Common myeloid progenitor, CD34-positive (primary cell): ENCODE measurements at regions of chr19 and their contacts with region 1.

Region 1: GRCh38 chr19:45001087-45001739 is at the start of gene RELB:
- DNase-seq: peak; percentile 88 to 92 (median 90)
- H3K4me3 ChIP-seq: peak within 1 kb of the TSS; percentile 50 to 90 (median 77)
- H3K27ac ChIP-seq: peak within 1 kb of the TSS; percentile 99 to 100
- H3K4me1 ChIP-seq: peaks cover 0 to 14% (median 12%) of the 10 kb centered on the region in 4 experiments
- H3K27me3 ChIP-seq: no peaks in the 10 kb centered on the region

Region 2: DNA sequence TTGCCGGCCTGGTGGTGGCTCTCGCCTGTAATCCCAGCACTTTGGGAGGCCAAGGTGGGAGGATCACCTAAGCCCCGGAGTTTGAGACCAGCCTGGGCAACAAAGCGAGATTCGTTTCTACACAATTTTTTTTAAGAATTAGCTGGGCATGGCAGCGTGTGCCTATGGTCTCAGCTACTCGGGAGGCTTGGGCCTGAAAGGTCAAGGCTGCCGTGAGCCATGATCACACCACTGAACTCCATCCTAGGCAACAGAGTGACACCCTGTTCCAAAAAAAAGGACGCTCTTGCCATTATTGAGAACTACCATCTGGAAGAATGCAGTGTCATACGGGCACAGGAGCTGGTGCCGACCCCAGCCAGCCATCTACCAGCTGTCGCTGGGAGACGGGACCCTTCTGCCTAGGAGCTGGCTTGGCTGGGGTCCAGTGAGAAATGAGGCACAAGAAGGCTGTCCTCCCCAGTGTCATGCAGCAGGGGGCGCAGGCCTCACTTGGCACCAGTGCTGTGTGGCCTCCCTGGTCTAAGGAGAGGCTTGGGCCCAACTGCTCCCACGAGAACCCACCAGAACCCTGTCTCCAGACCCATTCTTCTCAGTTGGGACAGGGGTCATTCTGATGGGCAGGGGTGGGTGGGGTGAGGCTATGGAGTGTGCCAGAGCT is 12.2 kb before region 1 on chr19:
- CTCF ChIA-PET with region 1: interaction called, 11 read pairs
- POLR2A ChIA-PET with region 1: interaction called, 4 read pairs
- DNase-seq: peak; percentile 68 to 78 (median 75)
- H3K4me3 ChIP-seq: no peak overlapping the region
- H3K27ac ChIP-seq: no peak overlapping the region
- H3K4me1 ChIP-seq: peaks cover 0 to 2% (median 0%) of the 10 kb centered on the region in 4 experiments
- H3K27me3 ChIP-seq: no peaks in the 10 kb centered on the region

Region 3: DNA sequence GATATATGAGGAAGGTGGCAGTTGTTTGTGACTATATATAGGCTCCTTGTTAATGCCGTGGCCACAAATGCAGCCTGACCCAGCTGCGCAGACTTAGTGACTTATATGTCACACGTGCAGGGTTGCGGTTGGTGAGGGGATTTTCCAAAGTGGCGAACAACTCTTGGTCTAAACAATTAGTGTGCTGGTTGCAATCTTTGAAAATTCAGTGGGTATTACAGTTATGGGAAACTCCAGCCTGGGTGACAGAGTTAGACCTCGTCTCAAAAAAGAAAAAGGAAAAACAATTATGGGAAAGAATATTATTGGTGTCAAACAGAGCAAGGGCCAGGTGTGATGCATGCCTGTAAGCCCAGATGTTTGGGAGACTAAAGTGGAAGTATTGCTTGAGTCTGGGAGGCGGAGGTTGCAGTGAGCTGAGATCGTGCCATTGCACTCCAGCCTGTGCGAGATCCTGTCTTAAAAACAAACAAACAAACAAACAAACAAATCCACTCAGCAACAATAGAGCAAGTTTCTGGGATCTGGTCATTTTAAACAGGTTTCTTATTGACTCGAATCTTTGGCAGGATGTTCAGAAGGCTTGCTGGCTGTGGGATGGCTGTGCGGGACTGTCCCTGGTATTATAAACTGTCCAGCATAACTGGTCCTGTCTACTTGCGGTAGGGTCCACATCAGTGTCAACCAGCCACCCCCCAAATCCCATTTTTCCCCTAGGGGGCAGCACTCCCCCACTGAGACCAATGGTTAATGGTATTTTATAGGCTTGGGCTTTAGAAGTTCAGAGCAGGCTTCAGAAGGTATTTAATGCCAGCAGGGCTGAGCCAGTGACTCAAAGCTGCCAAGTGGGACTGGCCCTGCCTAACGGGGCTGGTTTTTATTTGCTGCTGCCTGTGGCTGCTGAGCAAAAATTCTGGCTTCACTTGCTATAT is 15.4 kb after region 1 on chr19:
- CTCF ChIA-PET with region 1: no interaction called
- POLR2A ChIA-PET with region 1: interaction called, 11 read pairs
- DNase-seq: peak; percentile 67 to 82 (median 79)
- H3K4me3 ChIP-seq: no peak overlapping the region
- H3K27ac ChIP-seq: peak overlapping the region in 1 of 2 experiments; percentile 34
- H3K4me1 ChIP-seq: no peaks in the 10 kb centered on the region
- H3K27me3 ChIP-seq: no peaks in the 10 kb centered on the region